ENCODE measurements at regions of chrX and their contacts with region 1.

Region 1: DNA sequence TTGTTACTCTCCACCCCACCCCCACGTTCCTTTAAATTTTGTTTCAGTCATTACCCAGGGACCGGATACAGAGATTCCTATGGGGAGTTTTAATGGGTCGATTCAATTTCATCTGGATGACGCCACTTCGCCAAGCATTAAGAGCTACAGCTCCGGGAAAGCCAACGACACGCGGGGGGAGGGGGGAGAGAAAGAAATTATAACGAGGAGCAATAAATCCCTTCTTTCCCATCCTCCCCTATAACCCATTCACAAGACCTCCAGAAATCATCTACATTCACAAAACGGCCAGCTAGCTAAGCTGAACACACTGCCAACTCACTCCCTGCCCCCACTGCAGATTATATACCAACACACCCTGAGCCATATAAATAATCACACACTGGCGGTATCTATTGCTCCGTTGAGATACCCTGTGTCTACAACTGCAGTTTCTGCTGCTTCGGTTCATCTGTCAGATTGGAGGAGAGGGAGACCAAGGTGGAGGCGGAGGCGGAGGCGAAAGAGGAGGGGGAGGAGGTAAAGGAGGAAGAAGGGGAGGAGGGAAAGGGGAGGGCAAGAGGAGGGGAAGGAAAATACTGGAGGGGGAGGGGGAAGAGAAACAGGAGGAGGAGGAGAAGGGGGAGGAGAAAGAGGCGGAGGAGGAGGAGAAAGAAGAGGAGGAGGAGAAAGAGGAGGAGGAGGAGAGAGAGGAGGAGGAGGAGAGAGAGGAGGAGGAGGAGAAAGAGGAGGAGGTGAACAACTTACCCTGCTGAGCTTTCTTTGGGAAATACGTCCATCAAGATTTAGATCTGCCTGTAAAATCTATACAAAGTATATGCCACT is 113.9 kb upstream of the VAMP7 start:
- DNase-seq: peak in 1 of 2 donors; percentile 76
- H3K4me3 ChIP-seq: peak overlapping the region; percentile 46 to 66
- H3K27ac ChIP-seq: peak overlapping the region; percentile 36 to 71
- H3K4me1 ChIP-seq: no peaks in the 10 kb centered on the region
- H3K27me3 ChIP-seq: no peaks in the 10 kb centered on the region
- CTCF ChIP-seq: no peak

Region 2: GRCh38 chrX:155612312-155613224 is 154.7 kb before region 1 on chrX and contains the start of gene TMLHE:
- intact Hi-C with region 1: loop called (anchors 2 kb)
- DNase-seq: peak; percentile 9 to 75
- H3K4me3 ChIP-seq: peak within 1 kb of the TSS; percentile 66 to 75
- H3K27ac ChIP-seq: peak within 1 kb of the TSS; percentile 86 to 88
- H3K4me1 ChIP-seq: no peaks in the 10 kb centered on the region
- H3K27me3 ChIP-seq: no peaks in the 10 kb centered on the region
- CTCF ChIP-seq: no peak
- total RNA-seq, gene TMLHE: 8.8 TPM

Region 3: DNA sequence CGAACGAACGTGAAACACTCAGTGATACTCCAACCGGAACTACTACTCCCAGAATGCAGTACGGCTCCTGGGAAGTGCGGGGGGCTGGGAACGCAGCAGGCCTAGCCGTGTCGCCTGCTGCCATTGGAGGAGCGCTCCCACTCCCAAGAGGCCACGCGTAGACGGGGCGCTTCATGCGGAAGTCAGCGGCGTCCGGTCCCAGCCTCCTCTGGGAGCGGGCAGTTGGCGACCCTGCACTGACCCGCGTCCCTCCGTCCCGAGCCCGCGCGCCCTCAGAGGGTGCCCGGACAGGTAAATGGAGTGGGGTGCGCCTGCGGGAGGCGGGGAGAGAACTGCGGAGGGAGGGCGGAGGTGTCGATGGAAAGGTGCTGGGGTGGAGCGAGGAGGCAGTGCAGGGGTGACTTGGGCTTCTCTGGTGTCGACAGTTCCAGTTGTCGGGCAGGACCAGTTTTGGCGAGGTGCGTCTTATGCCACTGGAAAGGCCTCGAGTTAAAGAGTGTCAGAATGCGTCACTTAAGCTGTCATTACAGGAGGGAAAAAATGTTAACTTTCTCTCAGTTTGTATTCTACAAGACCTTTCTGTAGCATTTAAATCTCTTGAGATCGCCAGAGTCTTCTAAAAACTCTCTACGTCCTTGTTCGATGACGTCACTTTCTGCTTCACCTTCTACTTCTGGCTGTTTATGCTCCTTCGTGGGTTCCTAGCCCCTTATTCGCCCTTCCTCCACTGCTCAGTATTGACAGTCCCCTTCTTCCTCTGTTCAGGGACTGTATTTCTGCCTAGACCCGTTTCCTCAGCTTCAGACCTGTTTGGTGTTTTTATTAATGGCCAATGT is 114.1 kb after region 1 on chrX and contains the start of gene VAMP7:
- intact Hi-C with region 1: loop called (anchors 2 kb)
- DNase-seq: peak; percentile 69 to 91
- H3K4me3 ChIP-seq: peak within 1 kb of the TSS; percentile 71 to 76
- H3K27ac ChIP-seq: peak within 1 kb of the TSS; percentile 76 to 82
- H3K4me1 ChIP-seq: no peaks in the 10 kb centered on the region
- H3K27me3 ChIP-seq: no peaks in the 10 kb centered on the region
- CTCF ChIP-seq: no peak
- total RNA-seq, gene VAMP7: 8.0 TPM

Region 4: DNA sequence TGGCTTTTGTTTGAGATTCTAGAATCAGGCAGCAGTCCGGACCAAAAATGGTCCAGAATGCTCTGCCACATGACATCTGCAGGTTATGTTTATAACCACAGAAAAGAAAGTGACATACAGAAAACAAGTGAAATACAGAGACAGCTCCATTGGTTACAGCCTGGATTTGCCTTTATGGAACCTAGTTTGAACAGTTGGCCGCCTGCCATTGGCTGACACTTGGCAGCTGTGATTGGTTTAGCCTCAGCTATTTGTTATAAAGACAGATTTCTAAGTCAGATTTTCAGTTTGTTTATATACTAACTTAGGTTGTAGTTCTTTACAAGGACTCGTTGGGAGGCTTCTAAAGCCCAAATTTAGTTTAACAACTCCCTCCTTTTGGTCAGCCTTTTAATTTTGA is 189.4 kb after region 1 on chrX:
- intact Hi-C with region 1: no loop called
- DNase-seq: no peak
- H3K4me3 ChIP-seq: no peak overlapping the region
- H3K27ac ChIP-seq: no peak overlapping the region
- H3K4me1 ChIP-seq: no peaks in the 10 kb centered on the region
- H3K27me3 ChIP-seq: no peaks in the 10 kb centered on the region
- CTCF ChIP-seq: no peak

Region 5: DNA sequence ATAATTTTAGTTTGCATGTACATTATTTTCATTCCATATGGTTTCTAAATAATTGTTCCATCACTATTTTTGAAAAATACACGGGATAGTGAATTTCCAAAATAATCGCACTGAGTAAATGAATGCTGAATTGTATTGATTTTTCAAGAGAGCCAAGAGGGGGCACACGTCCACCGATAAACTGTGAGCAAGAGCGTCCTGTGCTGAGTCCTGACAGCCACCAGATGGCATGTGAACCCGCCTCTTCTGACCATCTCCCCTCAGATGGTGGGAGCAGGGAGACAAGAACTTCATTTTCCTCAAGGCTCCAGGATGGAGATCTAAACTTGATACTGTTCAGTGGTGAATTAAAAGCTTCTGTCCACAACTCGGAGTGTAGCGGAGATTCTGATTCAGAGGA is 199.6 kb after region 1 on chrX:
- intact Hi-C with region 1: no loop called
- DNase-seq: no peak
- H3K4me3 ChIP-seq: no peak overlapping the region
- H3K27ac ChIP-seq: no peak overlapping the region
- H3K4me1 ChIP-seq: no peaks in the 10 kb centered on the region
- H3K27me3 ChIP-seq: no peaks in the 10 kb centered on the region
- CTCF ChIP-seq: no peak